Sciatic nerve (tissue), 2 donors: ENCODE measurements at regions of chrX and their contacts with region 1.

Region 1: DNA sequence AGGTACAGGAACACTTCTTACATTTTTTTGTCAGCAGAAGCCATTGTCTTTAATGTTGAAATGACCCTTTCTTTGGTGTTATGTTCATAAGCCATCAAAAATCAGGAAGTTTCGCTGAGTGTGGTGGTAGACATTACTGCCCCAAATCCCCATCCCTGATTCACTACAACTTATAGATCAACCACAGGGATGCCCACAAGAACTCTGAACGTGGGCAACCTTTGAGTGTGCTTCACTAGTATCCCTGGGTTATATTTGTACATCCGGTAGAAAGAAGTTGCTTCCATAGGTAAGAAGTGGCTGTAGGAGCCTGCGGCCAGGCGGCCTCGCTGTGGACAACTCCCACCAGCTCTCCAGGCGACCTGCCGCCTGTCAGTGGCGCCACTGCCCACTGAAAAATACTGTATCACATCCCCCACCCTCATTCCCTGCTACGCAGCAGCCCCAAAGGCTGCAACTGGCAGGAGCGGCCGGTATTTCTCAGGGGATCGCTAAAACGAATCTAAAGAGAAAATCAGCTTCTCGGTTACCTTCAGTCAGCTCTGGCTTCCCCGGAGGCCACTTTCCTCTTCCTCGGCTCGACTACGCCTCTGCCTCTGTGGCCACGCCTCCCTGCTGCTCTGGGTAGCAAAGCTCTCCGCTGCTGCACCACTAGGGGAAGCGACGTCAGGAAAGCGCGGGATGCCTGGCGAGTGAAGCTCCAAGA is 13.9 kb upstream of the ETDC start:
- DNase-seq: no peak
- ATAC-seq: peak; percentile 62

Region 2: GRCh38 chrX:134568285-134569016 is 726.9 kb before region 1 on chrX:
- intact Hi-C with region 1: loop called (anchors 5 kb)
- DNase-seq: no peak
- ATAC-seq: no peak

Region 3: GRCh38 chrX:134948333-134949241 is 346.8 kb before region 1 on chrX:
- intact Hi-C with region 1: no loop called
- DNase-seq: no peak
- ATAC-seq: no peak